SK-N-SH (cell line): ENCODE measurements at regions of chr17 and their contacts with region 1.

Region 1: GRCh38 chr17:51153210-51154072 is at the start of gene NME1:
- DNase-seq: peak; percentile 96
- H3K4me3 ChIP-seq: peak within 1 kb of the TSS; percentile 69 to 72
- H3K27ac ChIP-seq: peak within 1 kb of the TSS; percentile 81 to 94
- H3K4me1 ChIP-seq: peaks cover 9 to 11% of the 10 kb centered on the region in 2 experiments; a peak in 3 of 4 replicates
- H3K27me3 ChIP-seq: no peaks in the 10 kb centered on the region
- CTCF ChIP-seq: peak; percentile 99
- EP300 ChIP-seq: peak; percentile 52 to 76; a peak in 3 of 4 replicates
- RAD21 ChIP-seq: peak; percentile 98
- polyA plus RNA-seq, gene NME1: 654 and 658 TPM in 2 replicates

Region 2: DNA sequence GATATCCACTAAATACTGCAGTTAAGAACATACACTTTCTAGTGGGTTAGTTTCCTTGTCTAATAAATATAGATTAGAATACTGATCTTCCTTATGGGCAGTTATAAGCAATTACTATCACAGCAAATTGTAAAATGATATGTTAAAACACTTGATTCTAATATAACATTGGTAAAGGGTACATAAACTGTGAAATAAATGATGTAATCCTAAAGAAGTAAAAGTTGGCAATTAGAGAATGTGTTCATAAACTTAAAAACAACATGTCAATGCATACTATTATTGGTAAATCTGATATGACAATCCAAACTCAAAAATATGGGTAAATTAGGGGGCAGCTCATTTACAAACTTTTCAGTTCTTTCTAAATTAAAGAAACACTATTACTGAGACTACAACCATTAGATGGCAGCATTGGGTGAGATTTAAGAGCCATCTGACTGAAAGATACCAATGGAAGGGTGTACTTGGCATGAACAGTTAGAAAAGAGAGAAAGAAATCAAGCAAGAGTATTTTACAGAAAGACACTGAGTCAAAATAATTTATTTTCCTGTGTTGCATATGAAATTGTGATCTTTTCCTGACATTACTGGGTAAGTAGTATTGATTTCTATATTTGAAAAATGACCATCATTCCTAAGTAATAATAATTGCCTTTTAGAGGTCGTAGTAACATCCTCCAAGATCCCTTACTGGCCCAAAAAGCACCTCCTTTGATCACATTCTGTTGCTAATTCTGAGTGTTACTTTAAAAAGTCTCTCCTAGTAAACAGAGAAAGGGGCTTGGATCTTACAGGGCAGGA is 152.4 kb before region 1 on chr17:
- CTCF ChIA-PET with region 1: interaction called, 115 read pairs
- POLR2A ChIA-PET with region 1: interaction called, 6 read pairs
- DNase-seq: peak; percentile 63
- H3K4me3 ChIP-seq: no peak overlapping the region
- H3K27ac ChIP-seq: peak overlapping the region in 1 of 2 experiments; percentile 37; a peak in 2 of 4 replicates
- H3K4me1 ChIP-seq: no peaks in the 10 kb centered on the region
- H3K27me3 ChIP-seq: no peaks in the 10 kb centered on the region
- CTCF ChIP-seq: peak; percentile 89
- EP300 ChIP-seq: no peak
- RAD21 ChIP-seq: peak; percentile 96

Region 3: DNA sequence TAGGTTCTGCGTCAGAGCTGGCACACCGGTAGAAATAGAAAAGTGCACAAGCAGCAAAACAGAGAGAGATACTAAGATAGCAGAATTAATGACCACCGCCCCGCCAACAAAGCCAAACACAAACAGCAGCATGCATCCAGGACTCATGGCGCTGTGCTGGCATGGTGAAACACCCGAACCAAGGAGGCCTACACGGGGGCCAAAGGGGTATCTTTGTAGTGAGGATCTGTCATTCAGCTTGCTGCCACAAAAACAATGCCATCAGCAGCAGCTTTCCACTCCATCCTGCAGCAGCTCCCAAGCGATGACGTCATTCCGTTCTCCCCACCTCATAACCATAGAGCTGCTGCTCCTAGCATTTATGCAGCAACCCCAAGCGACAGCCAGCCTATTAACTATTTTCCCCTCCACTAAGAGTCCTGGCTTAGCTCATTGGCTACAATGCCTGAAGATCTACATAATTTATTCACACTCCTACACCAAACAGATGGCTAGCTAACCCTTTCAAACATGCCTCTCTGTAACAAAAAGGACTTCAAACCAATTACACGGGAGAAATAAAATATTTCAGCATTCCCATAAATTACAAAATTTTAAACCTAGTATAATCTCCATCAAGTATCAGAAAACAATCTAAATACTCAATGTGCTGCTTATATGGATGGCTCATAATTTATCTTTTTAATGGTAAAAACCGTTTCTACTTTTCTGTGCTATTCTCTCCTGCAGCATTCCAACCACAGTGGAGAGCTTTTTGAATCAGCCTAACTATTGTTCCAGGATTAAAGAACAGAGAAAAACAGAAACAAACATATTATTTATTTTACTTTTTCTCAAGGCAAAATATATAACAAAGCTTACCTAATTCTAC is 106.7 kb before region 1 on chr17:
- CTCF ChIA-PET with region 1: interaction called, 37 read pairs
- POLR2A ChIA-PET with region 1: interaction called, 9 read pairs
- DNase-seq: peak; percentile 84
- H3K4me3 ChIP-seq: peak overlapping the region; percentile 56 to 60
- H3K27ac ChIP-seq: peak overlapping the region; percentile 71 to 94
- H3K4me1 ChIP-seq: peaks cover 26 to 32% of the 10 kb centered on the region in 2 experiments
- H3K27me3 ChIP-seq: no peaks in the 10 kb centered on the region
- CTCF ChIP-seq: no peak; the same call in 1 of the 2 replicates
- EP300 ChIP-seq: peak in 1 of 2 experiments; percentile 57; a peak in 2 of 4 replicates
- RAD21 ChIP-seq: no peak

Region 4: GRCh38 chr17:51120739-51121617 is 32.5 kb before region 1 on chr17 and contains the start of gene SPAG9:
- CTCF ChIA-PET with region 1: interaction called, 25 read pairs
- POLR2A ChIA-PET with region 1: interaction called, 12 read pairs
- DNase-seq: peak; percentile 100
- H3K4me3 ChIP-seq: peak within 1 kb of the TSS; percentile 73 to 86
- H3K27ac ChIP-seq: peak within 1 kb of the TSS; percentile 92 to 98
- H3K4me1 ChIP-seq: peaks cover 9 to 12% of the 10 kb centered on the region in 2 experiments
- H3K27me3 ChIP-seq: no peaks in the 10 kb centered on the region
- CTCF ChIP-seq: no peak
- EP300 ChIP-seq: no peak
- RAD21 ChIP-seq: no peak
- polyA plus RNA-seq, gene SPAG9: 32.1 and 44.5 TPM in 2 replicates

Region 5: GRCh38 chr17:51142597-51142996 is 10.8 kb before region 1 on chr17:
- CTCF ChIA-PET with region 1: interaction called, 37 read pairs
- POLR2A ChIA-PET with region 1: interaction called, 5 read pairs
- DNase-seq: no peak
- H3K4me3 ChIP-seq: no peak overlapping the region
- H3K27ac ChIP-seq: no peak overlapping the region
- H3K4me1 ChIP-seq: no peaks in the 10 kb centered on the region; a peak in 1 of 4 replicates
- H3K27me3 ChIP-seq: no peaks in the 10 kb centered on the region
- CTCF ChIP-seq: no peak
- EP300 ChIP-seq: no peak
- RAD21 ChIP-seq: no peak